ENCODE measurements at regions of chr14 and their contacts with region 1.

Region 1: DNA sequence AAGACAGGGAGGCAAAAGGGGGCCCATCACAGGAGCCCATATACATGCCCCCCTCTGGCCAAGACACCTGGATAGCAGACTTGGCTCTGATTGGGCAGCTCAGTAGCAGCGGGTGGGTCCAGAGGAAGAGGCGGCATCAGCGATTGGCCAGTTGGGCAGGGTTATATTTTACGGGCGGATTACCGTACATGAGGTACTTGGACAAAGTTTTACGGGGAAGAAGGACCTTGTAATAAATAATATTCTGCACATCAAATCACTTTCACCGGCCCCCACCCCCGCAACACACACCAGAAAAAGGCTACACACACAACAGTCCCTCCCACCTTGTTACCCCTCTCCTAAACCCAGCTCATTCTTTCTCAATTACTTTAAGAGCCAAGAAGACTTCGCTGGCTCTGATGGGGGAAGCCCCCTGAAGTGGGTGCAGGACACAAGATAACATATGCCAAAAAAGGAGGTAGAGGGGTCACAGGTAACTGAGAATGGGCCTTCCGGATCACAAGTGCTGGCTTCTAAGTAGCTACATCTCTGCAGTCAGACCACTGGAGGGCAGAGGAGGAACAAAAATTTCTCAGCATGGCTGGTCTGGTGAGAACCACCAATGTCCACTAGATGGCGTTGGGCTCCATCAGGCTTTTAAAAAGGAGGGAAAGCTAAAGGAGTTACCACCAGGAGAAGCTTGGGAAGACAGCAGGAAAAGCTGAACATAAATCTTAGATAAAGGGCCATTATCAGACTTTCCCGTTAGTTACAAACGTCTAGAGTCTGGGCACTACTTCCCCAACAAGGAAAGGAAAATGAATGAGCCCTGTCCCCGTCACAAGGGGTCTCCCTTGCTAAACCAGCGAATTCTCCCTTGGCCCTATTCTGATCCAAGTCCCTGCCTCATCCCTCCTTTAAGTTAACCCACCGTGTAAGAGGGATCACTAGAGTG is 11.4 kb upstream of the CDH24 start:
- DNase-seq: peak; percentile 37 to 83 (median 74)
- ATAC-seq: peak; percentile 90
- H3K4me3 ChIP-seq: no peak overlapping the region
- H3K4me3 Mint-ChIP-seq: peak overlapping the region in 7 of 10 donors; percentile 56 to 76 (median 64)
- H3K27ac ChIP-seq: no peak overlapping the region
- H3K27ac Mint-ChIP-seq: peak overlapping the region; percentile 63 to 88 (median 78)
- H3K4me1 ChIP-seq: peaks cover 16 to 28% of the 10 kb centered on the region in 2 donors
- H3K4me1 Mint-ChIP-seq: peaks cover 30 to 58% (median 46%) of the 10 kb centered on the region in 7 donors
- H3K27me3 ChIP-seq: no peaks in the 10 kb centered on the region
- H3K27me3 Mint-ChIP-seq: no peaks in the 10 kb centered on the region

Region 2: GRCh38 chr14:22973217-22974032 is 95.3 kb before region 1 on chr14:
- CTCF ChIA-PET with region 1: interaction called, 21 read pairs
- POLR2A ChIA-PET with region 1: no interaction called
- intact Hi-C with region 1: no loop called
- DNase-seq: peak in 6 of 9 donors; percentile 28 to 46 (median 40)
- ATAC-seq: peak; percentile 73
- H3K4me3 ChIP-seq: no peak overlapping the region
- H3K4me3 Mint-ChIP-seq: no peak overlapping the region
- H3K27ac ChIP-seq: no peak overlapping the region
- H3K27ac Mint-ChIP-seq: no peak overlapping the region
- H3K4me1 ChIP-seq: no peaks in the 10 kb centered on the region
- H3K4me1 Mint-ChIP-seq: peaks cover 0 to 1% (median 0%) of the 10 kb centered on the region in 7 donors
- H3K27me3 ChIP-seq: no peaks in the 10 kb centered on the region
- H3K27me3 Mint-ChIP-seq: peaks cover 0 to 19% (median 0%) of the 10 kb centered on the region in 5 donors

Region 3: GRCh38 chr14:23006544-23007419 is 62.0 kb before region 1 on chr14:
- CTCF ChIA-PET with region 1: interaction called, 15 read pairs
- POLR2A ChIA-PET with region 1: interaction called, 8 read pairs
- intact Hi-C with region 1: loop called in 1 of 2 experiments (anchors 1 kb)
- DNase-seq: peak; percentile 88 to 99 (median 98)
- ATAC-seq: peak; percentile 97
- H3K4me3 ChIP-seq: peak overlapping the region; percentile 94
- H3K4me3 Mint-ChIP-seq: peak overlapping the region; percentile 91 to 100 (median 96)
- H3K27ac ChIP-seq: peak overlapping the region; percentile 86
- H3K27ac Mint-ChIP-seq: peak overlapping the region; percentile 87 to 99 (median 98)
- H3K4me1 ChIP-seq: peaks cover 9 to 25% of the 10 kb centered on the region in 2 donors
- H3K4me1 Mint-ChIP-seq: peaks cover 12 to 60% (median 48%) of the 10 kb centered on the region in 7 donors
- H3K27me3 ChIP-seq: no peaks in the 10 kb centered on the region
- H3K27me3 Mint-ChIP-seq: no peaks in the 10 kb centered on the region

Region 4: GRCh38 chr14:23112359-23113178 is 43.8 kb after region 1 on chr14:
- CTCF ChIA-PET with region 1: interaction called, 7 read pairs
- POLR2A ChIA-PET with region 1: interaction called, 16 read pairs
- intact Hi-C with region 1: loop called (anchors 1 kb)
- DNase-seq: no peak
- ATAC-seq: peak; percentile 80
- H3K4me3 ChIP-seq: no peak overlapping the region
- H3K4me3 Mint-ChIP-seq: no peak overlapping the region
- H3K27ac ChIP-seq: no peak overlapping the region
- H3K27ac Mint-ChIP-seq: no peak overlapping the region
- H3K4me1 ChIP-seq: peaks cover 0 to under 1% of the 10 kb centered on the region in 2 donors
- H3K4me1 Mint-ChIP-seq: peaks cover 3 to 31% (median 11%) of the 10 kb centered on the region in 7 donors
- H3K27me3 ChIP-seq: no peaks in the 10 kb centered on the region
- H3K27me3 Mint-ChIP-seq: peaks cover 0 to 9% (median 0%) of the 10 kb centered on the region in 5 donors

Region 5: DNA sequence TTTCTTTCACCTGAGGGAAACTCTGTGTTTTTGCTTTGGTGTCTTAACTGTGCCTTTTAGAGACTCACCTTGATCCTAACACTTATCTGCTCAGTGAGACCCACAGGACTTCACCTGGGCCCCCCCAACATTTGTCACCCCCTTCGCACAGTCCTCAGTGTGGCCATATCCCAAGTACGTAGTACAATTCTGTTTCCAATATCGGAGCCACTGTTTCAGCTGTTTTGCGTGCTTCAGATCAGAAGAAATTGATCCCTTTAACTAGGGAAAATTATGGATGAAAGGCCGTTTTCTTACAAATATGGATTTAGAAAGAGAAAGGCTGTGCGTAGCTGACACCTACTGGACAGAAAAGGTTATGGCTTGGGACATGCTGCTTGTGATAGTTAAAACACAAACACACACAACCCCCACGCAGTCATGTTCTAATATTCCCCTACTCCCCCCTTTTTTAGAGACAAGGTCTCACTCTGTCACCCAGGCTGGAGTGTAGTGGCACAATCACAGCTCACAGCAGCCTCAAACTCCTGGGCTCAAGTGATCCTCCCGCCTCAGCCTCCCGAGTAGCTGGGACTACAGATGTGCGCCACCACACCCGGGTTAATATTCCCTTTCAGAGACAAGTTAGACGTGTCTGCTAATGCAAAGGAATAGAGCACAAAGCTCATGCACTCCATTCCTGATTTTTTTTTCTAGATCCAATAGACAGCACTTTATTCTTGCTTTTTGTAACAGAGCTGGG is 118.3 kb after region 1 on chr14:
- CTCF ChIA-PET with region 1: interaction called, 16 read pairs
- POLR2A ChIA-PET with region 1: interaction called, 3 read pairs
- intact Hi-C with region 1: loop called (anchors 1 to 2 kb)
- DNase-seq: peak in 7 of 9 donors; percentile 25 to 55 (median 36)
- ATAC-seq: peak; percentile 73
- H3K4me3 ChIP-seq: no peak overlapping the region
- H3K4me3 Mint-ChIP-seq: no peak overlapping the region
- H3K27ac ChIP-seq: no peak overlapping the region
- H3K27ac Mint-ChIP-seq: peak overlapping the region in 3 of 9 donors; percentile 12 to 65 (median 26)
- H3K4me1 ChIP-seq: peaks cover 3 to 4% of the 10 kb centered on the region in 2 donors
- H3K4me1 Mint-ChIP-seq: peaks cover 0 to 11% (median 2%) of the 10 kb centered on the region in 7 donors
- H3K27me3 ChIP-seq: no peaks in the 10 kb centered on the region
- H3K27me3 Mint-ChIP-seq: peaks cover 0 to 19% (median 0%) of the 10 kb centered on the region in 5 donors

Region 6: GRCh38 chr14:23294734-23295561 is 226.2 kb after region 1 on chr14:
- CTCF ChIA-PET with region 1: no interaction called
- POLR2A ChIA-PET with region 1: no interaction called
- intact Hi-C with region 1: loop called in 1 of 2 experiments (anchors 2 kb)
- DNase-seq: peak; percentile 38 to 77 (median 66)
- ATAC-seq: peak; percentile 97
- H3K4me3 ChIP-seq: no peak overlapping the region
- H3K4me3 Mint-ChIP-seq: peak overlapping the region; percentile 3 to 87 (median 60)
- H3K27ac ChIP-seq: peak overlapping the region; percentile 51
- H3K27ac Mint-ChIP-seq: peak overlapping the region; percentile 35 to 96 (median 76)
- H3K4me1 ChIP-seq: peaks cover 0 to 11% of the 10 kb centered on the region in 2 donors
- H3K4me1 Mint-ChIP-seq: peaks cover 12 to 31% (median 28%) of the 10 kb centered on the region in 7 donors
- H3K27me3 ChIP-seq: no peaks in the 10 kb centered on the region
- H3K27me3 Mint-ChIP-seq: no peaks in the 10 kb centered on the region

Region 7: GRCh38 chr14:23379366-23380196 is 310.8 kb after region 1 on chr14:
- CTCF ChIA-PET with region 1: interaction called, 3 read pairs
- POLR2A ChIA-PET with region 1: no interaction called
- intact Hi-C with region 1: loop called in 1 of 2 experiments (anchors 2 kb)
- DNase-seq: peak; percentile 48 to 77 (median 68)
- ATAC-seq: peak; percentile 86
- H3K4me3 ChIP-seq: no peak overlapping the region
- H3K4me3 Mint-ChIP-seq: no peak overlapping the region
- H3K27ac ChIP-seq: no peak overlapping the region
- H3K27ac Mint-ChIP-seq: no peak overlapping the region
- H3K4me1 ChIP-seq: no peaks in the 10 kb centered on the region
- H3K4me1 Mint-ChIP-seq: peaks cover 0 to 3% (median 0%) of the 10 kb centered on the region in 7 donors
- H3K27me3 ChIP-seq: no peaks in the 10 kb centered on the region
- H3K27me3 Mint-ChIP-seq: peaks cover 0 to 16% (median 0%) of the 10 kb centered on the region in 5 donors